ENCODE measurements at regions of chr11 and their contacts with region 1.

Region 1: GRCh38 chr11:123478352-123478987 is 48.4 kb downstream of the GRAMD1B start:
- DNase-seq: peak; percentile 33 to 52
- ATAC-seq: peak; percentile 58 to 76 (median 68)
- H3K4me3 ChIP-seq: peak overlapping the region in 1 of 10 donors; percentile 24
- H3K27ac ChIP-seq: peak overlapping the region in 1 of 10 donors; percentile 36
- H3K4me1 ChIP-seq: peaks cover 0 to 47% (median 15%) of the 10 kb centered on the region in 9 donors
- H3K27me3 ChIP-seq: no peaks in the 10 kb centered on the region
- CTCF ChIP-seq: peak; percentile 55 to 80 (median 73)

Region 2: GRCh38 chr11:123103326-123103980 is 375.0 kb before region 1 on chr11:
- intact Hi-C with region 1: loop called in 6 of 10 experiments (anchors 5 to 10 kb)
- DNase-seq: peak in 1 of 2 donors; percentile 85
- ATAC-seq: peak; percentile 82 to 93 (median 88)
- H3K4me3 ChIP-seq: no peak overlapping the region
- H3K27ac ChIP-seq: peak overlapping the region in 7 of 10 donors; percentile 31 to 75 (median 64)
- H3K4me1 ChIP-seq: peaks cover 8 to 46% (median 23%) of the 10 kb centered on the region in 9 donors
- H3K27me3 ChIP-seq: peaks cover 0 to 3% (median 0%) of the 10 kb centered on the region in 7 donors
- CTCF ChIP-seq: peak; percentile 56 to 83 (median 65)

Region 3: DNA sequence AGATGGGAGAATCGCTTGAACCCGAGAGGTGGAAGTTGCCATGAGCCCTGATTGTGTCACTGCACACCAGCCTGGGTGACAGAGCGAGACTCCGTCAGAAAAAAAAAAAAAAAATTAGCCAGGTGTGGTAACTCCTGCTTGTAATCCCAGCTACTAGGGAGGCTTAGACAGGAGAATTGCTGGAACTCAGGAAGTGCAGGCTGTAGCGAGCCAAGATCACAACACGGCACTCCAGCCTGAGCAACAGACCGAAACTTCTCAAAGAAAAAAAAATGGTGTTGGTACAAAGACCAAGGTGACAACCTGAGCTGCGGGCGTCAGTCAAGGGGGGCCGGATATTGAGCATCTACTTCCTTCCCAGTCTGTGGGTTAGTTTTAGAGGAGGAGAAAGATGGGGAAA is 368.1 kb before region 1 on chr11:
- intact Hi-C with region 1: loop called in 7 of 10 experiments (anchors 5 to 10 kb)
- DNase-seq: no peak
- ATAC-seq: peak in 2 of 8 donors; percentile 25 to 55
- H3K4me3 ChIP-seq: no peak overlapping the region
- H3K27ac ChIP-seq: no peak overlapping the region
- H3K4me1 ChIP-seq: peaks cover 0 to 7% (median 0%) of the 10 kb centered on the region in 9 donors
- H3K27me3 ChIP-seq: peaks cover 0 to 13% (median 3%) of the 10 kb centered on the region in 7 donors
- CTCF ChIP-seq: no peak

Region 4: DNA sequence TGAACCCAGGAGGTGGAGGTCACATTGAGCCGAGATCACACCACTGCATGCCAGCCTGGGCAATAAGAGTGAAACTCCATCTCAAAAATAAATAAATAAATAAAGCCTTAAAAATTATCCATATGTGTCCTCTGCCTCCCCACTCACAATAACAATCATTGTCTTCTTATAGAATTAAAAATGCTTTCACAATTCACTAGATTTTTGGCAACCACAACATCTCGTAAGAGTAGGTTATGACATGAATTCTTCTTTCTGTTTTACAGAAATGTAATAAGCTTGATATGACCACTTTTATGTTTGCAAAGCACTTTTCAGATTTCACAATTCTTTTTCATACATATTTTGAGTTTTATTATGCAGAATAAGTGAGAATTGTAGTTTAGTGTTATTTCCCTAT is 362.0 kb before region 1 on chr11:
- intact Hi-C with region 1: loop called in 2 of 10 experiments (anchors 5 kb)
- DNase-seq: no peak
- ATAC-seq: no peak
- H3K4me3 ChIP-seq: no peak overlapping the region
- H3K27ac ChIP-seq: no peak overlapping the region
- H3K4me1 ChIP-seq: peaks cover 0 to 7% (median 0%) of the 10 kb centered on the region in 9 donors
- H3K27me3 ChIP-seq: peaks cover 0 to 15% (median 4%) of the 10 kb centered on the region in 7 donors
- CTCF ChIP-seq: no peak

Region 5: DNA sequence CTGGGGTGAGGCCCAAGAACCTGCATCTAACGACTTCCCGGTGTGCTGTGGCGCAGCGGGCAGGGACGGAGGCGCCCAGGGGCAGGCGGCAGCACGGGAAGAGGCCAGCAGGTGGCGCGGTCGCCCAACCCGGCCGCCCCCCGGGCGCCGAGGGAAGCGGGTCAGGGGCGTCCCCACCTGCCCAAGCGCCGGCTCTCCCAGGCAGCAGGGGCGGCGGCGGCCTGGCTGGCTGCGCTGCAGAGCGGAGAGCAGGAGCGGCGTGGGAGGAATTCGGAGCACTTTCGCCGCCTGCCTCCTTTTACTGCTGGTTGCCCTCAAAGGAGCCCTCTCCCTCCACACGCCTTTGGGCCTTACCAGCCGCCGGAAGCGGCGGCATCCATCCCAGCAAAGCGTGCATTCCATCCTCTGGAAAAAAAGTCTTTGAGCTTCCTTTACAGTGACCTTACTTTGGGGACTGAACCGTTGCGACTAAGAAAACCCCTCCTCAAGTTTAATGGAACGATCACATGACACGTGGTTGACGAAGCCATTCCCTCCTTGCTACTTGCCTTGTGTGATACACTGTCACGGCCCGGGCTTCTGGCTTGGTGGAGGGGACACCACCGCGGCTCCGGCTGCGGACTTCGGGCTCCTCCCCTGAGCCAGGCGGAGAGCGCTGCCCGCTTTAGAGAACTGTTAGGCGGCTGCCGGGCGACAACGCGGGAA is 176.6 kb before region 1 on chr11:
- intact Hi-C with region 1: loop called (anchors 1 to 5 kb)
- DNase-seq: peak; percentile 39 to 70
- ATAC-seq: peak; percentile 84 to 91 (median 89)
- H3K4me3 ChIP-seq: peak overlapping the region in 9 of 10 donors; percentile 26 to 59 (median 48)
- H3K27ac ChIP-seq: peak overlapping the region in 4 of 10 donors; percentile 18 to 53 (median 28)
- H3K4me1 ChIP-seq: peaks cover 0 to 33% (median 13%) of the 10 kb centered on the region in 9 donors
- H3K27me3 ChIP-seq: peaks cover 0 to 26% (median 14%) of the 10 kb centered on the region in 7 donors
- CTCF ChIP-seq: peak; percentile 82 to 97 (median 92)

Region 6: GRCh38 chr11:123357961-123358841 is 120.3 kb before region 1 on chr11:
- intact Hi-C with region 1: loop called in 3 of 10 experiments (anchors 5 kb)
- DNase-seq: peak in 1 of 2 donors; percentile 40
- ATAC-seq: peak; percentile 46 to 68 (median 64)
- H3K4me3 ChIP-seq: peak overlapping the region; percentile 32 to 61 (median 57)
- H3K27ac ChIP-seq: peak overlapping the region; percentile 6 to 81 (median 70)
- H3K4me1 ChIP-seq: peaks cover 0 to 29% (median 15%) of the 10 kb centered on the region in 9 donors
- H3K27me3 ChIP-seq: peaks cover 0 to 56% (median 31%) of the 10 kb centered on the region in 7 donors
- CTCF ChIP-seq: peak in 7 of 9 donors; percentile 21 to 57 (median 34)

Region 7: DNA sequence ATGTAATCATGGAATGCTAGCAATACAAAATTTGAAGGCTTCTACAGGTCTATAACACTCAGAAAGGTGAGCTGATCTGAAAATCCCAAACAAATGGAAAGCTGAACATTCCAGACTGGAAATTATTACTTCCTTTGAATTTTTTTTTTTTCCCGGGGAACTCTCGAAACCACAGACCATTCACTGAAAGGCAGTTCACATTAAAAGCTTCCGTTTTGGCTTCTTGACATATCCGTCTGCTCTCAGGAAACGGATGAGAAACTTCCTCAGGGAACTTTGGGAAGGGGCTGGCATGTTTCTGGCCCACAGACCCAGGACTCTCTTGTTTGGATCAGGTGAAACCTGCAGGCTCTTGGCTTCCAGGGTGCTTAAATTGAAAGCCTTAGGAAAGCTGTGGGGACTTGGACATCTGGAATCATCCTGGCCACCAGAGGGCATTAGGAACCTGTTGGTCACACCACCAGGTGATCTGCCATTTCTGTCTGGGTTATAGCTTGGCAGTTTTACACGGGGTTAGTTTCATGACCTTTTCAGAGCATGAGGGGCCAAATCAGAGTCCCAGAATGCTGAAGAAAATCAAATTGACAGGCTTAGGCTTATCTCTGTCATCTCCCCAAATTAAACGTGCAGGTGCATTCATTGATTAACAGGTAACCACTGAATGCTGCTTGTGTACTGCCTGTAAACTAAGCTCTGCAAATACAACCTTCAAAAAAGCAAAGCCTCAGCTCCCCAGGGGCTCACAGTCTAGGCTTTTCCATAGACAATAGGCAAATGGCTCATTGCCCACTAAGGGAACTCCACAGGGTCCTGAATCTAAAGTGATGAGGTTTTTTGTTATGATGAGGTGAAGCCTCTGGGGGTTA is 71.1 kb before region 1 on chr11:
- intact Hi-C with region 1: loop called (anchors 1 to 5 kb)
- DNase-seq: peak in 1 of 2 donors; percentile 71
- ATAC-seq: peak; percentile 31 to 68 (median 63)
- H3K4me3 ChIP-seq: peak overlapping the region in 2 of 10 donors; percentile 7 to 39
- H3K27ac ChIP-seq: peak overlapping the region in 6 of 10 donors; percentile 27 to 76 (median 46)
- H3K4me1 ChIP-seq: peaks cover 0 to 43% (median 28%) of the 10 kb centered on the region in 9 donors
- H3K27me3 ChIP-seq: peaks cover 0 to 4% (median 0%) of the 10 kb centered on the region in 7 donors
- CTCF ChIP-seq: peak; percentile 14 to 76 (median 65)

Region 8: DNA sequence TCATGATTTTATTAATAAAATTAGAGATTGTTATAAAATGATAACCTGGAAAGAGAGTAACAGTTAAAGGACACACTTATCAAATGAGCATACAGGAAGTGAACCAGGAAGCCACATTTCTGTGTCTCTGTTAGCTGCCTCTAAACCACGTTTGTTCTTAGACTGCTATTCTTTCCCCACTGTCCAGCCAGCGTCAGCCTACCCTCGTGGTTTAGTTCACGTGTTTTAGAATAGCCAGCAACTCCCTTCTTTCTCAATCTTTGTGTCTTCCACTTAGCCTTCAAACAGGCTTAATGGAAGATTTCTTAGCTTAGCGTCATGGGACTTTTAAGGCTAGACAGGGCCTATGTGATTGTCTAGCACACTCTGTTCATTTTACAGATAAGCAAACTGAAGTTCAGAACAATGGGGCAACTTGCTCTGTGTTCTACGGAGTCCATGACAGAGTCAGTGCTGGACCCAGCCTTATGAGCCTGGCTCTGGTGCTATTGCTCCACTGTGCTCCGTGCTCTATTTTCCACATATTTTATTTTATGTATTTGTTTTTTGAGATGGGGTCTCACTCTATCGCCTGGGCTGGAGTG is 21.2 kb before region 1 on chr11:
- intact Hi-C with region 1: no loop called
- DNase-seq: no peak
- ATAC-seq: peak in 6 of 8 donors; percentile 15 to 39 (median 27)
- H3K4me3 ChIP-seq: no peak overlapping the region
- H3K27ac ChIP-seq: peak overlapping the region in 6 of 10 donors; percentile 12 to 87 (median 39)
- H3K4me1 ChIP-seq: peaks cover 0 to 57% (median 24%) of the 10 kb centered on the region in 9 donors
- H3K27me3 ChIP-seq: no peaks in the 10 kb centered on the region
- CTCF ChIP-seq: no peak

Measured in heart right ventricle (tissue), 16 donors.